Mammary epithelial cell (primary cell): ENCODE measurements at regions of chr2 and their contacts with region 1.

Region 1: DNA sequence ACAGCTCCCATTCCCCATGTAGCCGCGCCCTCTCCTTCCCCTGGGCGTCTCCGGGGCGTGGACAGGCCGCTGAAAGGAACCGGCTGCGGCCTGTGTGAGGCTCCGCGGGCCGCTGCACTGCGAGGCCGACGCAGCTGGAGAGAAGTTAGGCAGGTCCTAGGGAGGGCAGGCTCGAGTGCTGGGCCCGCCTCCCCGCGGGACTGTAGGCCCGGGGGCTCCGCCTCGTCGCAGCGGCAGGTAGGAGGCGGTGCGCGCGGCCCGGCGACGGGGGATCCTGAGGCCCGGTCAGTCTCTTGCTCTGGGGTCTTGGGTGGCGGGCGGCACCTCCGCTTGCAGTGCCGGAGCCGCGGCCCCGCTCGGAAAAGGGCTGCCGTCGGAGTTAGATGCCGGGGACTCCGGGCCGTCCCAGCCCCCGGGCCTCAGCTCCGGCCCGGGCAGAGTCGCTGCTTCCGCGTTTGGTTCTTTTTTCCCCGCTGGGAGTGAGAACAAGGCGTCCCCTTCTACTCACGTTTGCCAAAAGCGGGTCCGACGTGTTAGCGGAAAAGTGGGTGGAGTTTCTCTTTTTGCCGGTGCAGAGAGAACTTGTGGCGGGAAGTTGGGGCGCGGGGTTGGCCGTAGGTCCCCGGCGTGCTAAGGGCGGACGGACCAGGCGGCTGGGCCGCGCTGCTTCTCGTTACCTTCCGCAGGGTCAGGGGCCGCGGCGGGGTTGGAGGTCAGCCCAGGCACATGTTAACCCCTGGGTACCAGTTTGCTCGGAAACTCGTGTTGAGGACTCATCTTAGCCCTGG is at the start of gene VRK2:
- DNase-seq: peak; percentile 97
- H3K4me3 ChIP-seq: peak within 1 kb of the TSS; percentile 61 to 94 (median 77)
- H3K27ac ChIP-seq: peak within 1 kb of the TSS; percentile 86
- H3K4me1 ChIP-seq: peaks cover 16% of the 10 kb centered on the region
- H3K27me3 ChIP-seq: no peaks in the 10 kb centered on the region
- CTCF ChIP-seq: peak in 1 of 2 donors; percentile 24
- total RNA-seq, gene VRK2: 25.5 to 27.5 TPM

Region 2: DNA sequence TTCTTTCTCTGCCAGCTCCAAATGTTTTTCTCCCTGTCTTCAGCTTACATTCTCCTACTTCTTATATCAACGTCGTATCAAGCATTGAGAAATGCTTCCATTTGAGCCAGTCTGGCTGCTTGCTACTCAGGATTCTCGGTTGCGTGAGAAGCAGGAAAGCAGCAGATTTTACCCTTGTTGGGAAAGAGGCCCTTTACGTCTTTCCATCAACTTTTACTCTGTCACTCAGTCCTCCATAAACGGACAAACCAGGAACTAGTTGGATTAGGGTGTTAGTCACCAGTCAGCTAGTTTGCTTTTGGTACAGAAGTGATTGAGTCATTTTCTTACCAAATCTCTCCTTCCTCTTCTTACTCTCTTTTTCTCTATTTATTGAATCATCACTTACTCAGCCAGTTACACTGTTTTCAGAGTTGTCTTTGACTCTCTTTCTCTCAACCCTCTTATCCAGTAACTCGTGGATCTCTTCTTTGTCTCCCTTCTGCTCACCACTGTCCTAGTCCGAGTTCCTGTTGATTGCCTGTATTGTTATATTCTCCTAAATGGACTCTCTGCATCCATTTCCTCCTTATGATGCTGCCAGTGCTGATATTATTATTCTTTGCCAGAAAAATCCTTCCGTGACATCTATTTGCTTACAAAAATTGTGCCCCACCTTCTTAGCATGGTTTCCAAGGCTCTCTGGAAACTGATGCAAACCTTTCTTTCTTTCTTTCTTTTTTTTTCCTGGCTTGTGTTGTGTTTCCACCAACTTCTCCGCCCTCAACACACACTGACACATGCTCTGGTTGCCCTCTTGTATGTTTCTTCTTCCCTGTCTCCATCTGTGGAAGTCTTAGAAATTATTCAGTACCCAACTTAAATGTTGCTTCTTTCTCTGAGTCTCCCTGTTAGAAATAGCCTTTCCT is 61.3 kb after region 1 on chr2:
- CTCF ChIA-PET with region 1: no interaction called
- dilution Hi-C with region 1: no loop called
- in situ Hi-C with region 1: no loop called
- intact Hi-C with region 1: loop called (anchors 2 kb)
- DNase-seq: peak; percentile 89
- H3K4me3 ChIP-seq: no peak overlapping the region
- H3K27ac ChIP-seq: peak overlapping the region; percentile 87
- H3K4me1 ChIP-seq: peaks cover 26% of the 10 kb centered on the region
- H3K27me3 ChIP-seq: no peaks in the 10 kb centered on the region
- CTCF ChIP-seq: no peak

Region 3: GRCh38 chr2:58131191-58132011 is 84.6 kb after region 1 on chr2:
- CTCF ChIA-PET with region 1: no interaction called
- dilution Hi-C with region 1: no loop called
- in situ Hi-C with region 1: no loop called
- intact Hi-C with region 1: no loop called
- DNase-seq: no peak
- H3K4me3 ChIP-seq: no peak overlapping the region
- H3K27ac ChIP-seq: no peak overlapping the region
- H3K4me1 ChIP-seq: peaks cover 7% of the 10 kb centered on the region
- H3K27me3 ChIP-seq: no peaks in the 10 kb centered on the region
- CTCF ChIP-seq: no peak

Region 4: DNA sequence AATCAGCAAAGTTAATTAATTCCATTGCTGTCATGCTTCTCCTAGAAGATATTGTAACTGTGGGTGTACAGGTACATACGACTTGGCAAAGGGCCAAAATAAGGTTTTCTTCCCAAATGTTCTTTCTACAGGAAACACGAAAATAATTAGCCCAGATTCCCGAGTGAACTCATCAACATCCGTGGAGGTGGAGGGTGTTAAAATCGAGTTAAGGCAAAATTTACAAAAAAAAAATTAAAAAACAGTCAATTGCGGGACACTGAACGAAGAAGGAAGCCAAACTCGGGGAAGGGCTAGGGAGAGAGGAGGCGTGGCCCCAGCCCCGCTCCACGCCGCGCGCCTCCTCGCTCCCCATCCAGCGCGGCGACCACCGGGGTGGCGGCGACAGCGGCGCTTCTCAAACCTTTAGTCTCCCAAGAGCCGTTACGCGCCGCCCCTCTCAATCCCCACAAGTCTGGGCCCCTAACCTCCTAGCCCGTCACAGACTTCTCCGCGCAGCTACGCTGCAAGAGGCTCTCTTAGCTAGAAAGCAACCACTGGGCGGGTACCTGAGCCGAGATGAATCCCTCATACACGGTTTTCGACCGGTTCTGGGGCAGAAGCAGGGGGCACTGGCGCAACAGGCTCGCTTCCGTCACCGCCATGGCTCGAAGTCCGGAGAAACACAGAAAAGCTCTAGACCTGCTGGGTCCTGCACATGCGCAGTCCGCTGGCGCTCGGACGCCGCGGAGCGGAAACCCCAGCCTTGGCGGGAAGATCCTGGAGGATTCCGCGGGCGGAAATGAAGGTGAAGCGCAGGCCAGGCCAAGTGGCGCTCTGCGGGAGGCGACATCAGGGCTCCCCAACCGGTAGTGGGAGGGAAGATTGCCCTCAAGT is 194.1 kb after region 1 on chr2 and contains the start of gene FANCL:
- CTCF ChIA-PET with region 1: no interaction called
- dilution Hi-C with region 1: no loop called
- in situ Hi-C with region 1: no loop called
- intact Hi-C with region 1: loop called (anchors 10 kb)
- DNase-seq: peak; percentile 78
- H3K4me3 ChIP-seq: peak within 1 kb of the TSS; percentile 64 to 82 (median 73)
- H3K27ac ChIP-seq: peak within 1 kb of the TSS; percentile 54
- H3K4me1 ChIP-seq: peaks cover 8% of the 10 kb centered on the region
- H3K27me3 ChIP-seq: no peaks in the 10 kb centered on the region
- CTCF ChIP-seq: no peak
- total RNA-seq, gene FANCL: 10.2 to 18.6 TPM